ENCODE measurements at regions of chr11 and their contacts with region 1.

Region 1: GRCh38 chr11:67439321-67439883 is 1.9 kb upstream of the PTPRCAP start:
- DNase-seq: no peak
- ATAC-seq: no peak
- H3K4me3 ChIP-seq: peak overlapping the region; percentile 90
- H3K27ac ChIP-seq: peak overlapping the region; percentile 99
- H3K4me1 ChIP-seq: peaks cover 29% of the 10 kb centered on the region
- H3K27me3 ChIP-seq: no peaks in the 10 kb centered on the region
- CTCF ChIP-seq: peak; percentile 23 to 49 (median 24); a peak in 4 of 6 replicates
- EP300 ChIP-seq: no peak
- POLR2A ChIP-seq: no peak
- RAD21 ChIP-seq: no peak

Region 2: GRCh38 chr11:67332081-67332691 is 107.2 kb before region 1 on chr11:
- CTCF ChIA-PET with region 1: no interaction called
- POLR2A ChIA-PET with region 1: no interaction called
- RAD21 ChIA-PET with region 1: no interaction called
- SMC1A ChIA-PET with region 1: no interaction called
- in situ Hi-C with region 1: no loop called
- intact Hi-C with region 1: no loop called
- DNase-seq: no peak
- ATAC-seq: no peak
- H3K4me3 ChIP-seq: no peak overlapping the region
- H3K27ac ChIP-seq: no peak overlapping the region
- H3K4me1 ChIP-seq: no peaks in the 10 kb centered on the region
- H3K27me3 ChIP-seq: no peaks in the 10 kb centered on the region
- CTCF ChIP-seq: no peak
- EP300 ChIP-seq: no peak
- POLR2A ChIP-seq: no peak
- RAD21 ChIP-seq: no peak

Region 3: DNA sequence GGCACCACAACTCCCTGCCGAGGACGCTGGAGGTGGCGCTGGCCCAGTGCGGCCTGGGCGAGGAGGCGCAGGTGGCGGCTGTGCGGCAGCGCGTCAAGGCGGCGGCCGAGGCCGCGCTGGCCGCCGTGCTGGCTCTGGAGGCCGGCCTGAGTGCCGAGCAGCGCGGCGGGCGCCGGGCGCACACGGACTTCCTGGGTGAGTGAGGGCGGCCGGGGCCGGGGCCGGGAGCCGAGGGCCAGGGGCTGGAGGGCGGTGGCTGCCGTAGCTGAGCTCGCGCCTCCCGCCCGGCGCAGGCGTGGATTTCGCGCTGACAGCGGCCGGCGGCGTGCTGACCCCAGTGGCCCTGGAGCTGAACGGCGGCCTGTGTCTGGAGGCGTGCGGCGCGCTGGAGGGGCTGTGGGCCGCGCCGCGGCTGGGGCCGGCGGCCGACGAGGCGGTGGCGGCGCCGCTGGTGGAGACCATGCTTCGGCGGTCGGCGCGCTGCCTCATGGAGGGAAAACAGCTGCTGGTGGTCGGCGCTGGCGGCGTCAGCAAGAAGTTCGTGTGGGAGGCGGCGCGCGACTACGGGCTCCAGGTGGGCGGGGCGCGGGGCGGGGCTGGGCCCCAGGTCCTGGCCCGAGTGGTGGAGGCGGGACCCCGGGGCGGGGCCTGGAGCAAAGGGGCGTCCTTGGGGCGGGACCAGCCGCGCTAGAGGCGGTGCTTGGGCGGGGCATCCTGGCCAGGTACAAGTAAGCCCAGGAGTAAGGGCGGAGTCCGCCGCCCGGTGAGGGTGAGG is 18.6 kb before region 1 on chr11:
- CTCF ChIA-PET with region 1: interaction called, 4 read pairs
- POLR2A ChIA-PET with region 1: interaction called, 16 read pairs
- RAD21 ChIA-PET with region 1: interaction called, 3 read pairs
- SMC1A ChIA-PET with region 1: interaction called, 3 read pairs
- in situ Hi-C with region 1: no loop called
- intact Hi-C with region 1: no loop called
- DNase-seq: no peak
- ATAC-seq: peak; percentile 94
- H3K4me3 ChIP-seq: peak overlapping the region; percentile 71
- H3K27ac ChIP-seq: no peak overlapping the region; the same call in 1 of the 2 replicates
- H3K4me1 ChIP-seq: peaks cover 2% of the 10 kb centered on the region; the same call in 1 of the 2 replicates
- H3K27me3 ChIP-seq: peaks cover 0 to 3% of the 10 kb centered on the region in 2 experiments; a peak in 2 of 4 replicates
- CTCF ChIP-seq: no peak
- EP300 ChIP-seq: no peak
- POLR2A ChIP-seq: peak; percentile 77
- RAD21 ChIP-seq: no peak

Region 4: GRCh38 chr11:67458266-67458665 is 18.9 kb after region 1 on chr11:
- CTCF ChIA-PET with region 1: interaction called, 20 read pairs
- POLR2A ChIA-PET with region 1: interaction called, 50 read pairs
- RAD21 ChIA-PET with region 1: interaction called, 7 read pairs
- SMC1A ChIA-PET with region 1: interaction called, 27 read pairs
- in situ Hi-C with region 1: no loop called
- intact Hi-C with region 1: no loop called
- DNase-seq: no peak
- ATAC-seq: no peak
- H3K4me3 ChIP-seq: no peak overlapping the region
- H3K27ac ChIP-seq: no peak overlapping the region
- H3K4me1 ChIP-seq: peaks cover 19% of the 10 kb centered on the region
- H3K27me3 ChIP-seq: no peaks in the 10 kb centered on the region
- CTCF ChIP-seq: no peak
- EP300 ChIP-seq: no peak
- POLR2A ChIP-seq: no peak
- RAD21 ChIP-seq: no peak

Region 5: DNA sequence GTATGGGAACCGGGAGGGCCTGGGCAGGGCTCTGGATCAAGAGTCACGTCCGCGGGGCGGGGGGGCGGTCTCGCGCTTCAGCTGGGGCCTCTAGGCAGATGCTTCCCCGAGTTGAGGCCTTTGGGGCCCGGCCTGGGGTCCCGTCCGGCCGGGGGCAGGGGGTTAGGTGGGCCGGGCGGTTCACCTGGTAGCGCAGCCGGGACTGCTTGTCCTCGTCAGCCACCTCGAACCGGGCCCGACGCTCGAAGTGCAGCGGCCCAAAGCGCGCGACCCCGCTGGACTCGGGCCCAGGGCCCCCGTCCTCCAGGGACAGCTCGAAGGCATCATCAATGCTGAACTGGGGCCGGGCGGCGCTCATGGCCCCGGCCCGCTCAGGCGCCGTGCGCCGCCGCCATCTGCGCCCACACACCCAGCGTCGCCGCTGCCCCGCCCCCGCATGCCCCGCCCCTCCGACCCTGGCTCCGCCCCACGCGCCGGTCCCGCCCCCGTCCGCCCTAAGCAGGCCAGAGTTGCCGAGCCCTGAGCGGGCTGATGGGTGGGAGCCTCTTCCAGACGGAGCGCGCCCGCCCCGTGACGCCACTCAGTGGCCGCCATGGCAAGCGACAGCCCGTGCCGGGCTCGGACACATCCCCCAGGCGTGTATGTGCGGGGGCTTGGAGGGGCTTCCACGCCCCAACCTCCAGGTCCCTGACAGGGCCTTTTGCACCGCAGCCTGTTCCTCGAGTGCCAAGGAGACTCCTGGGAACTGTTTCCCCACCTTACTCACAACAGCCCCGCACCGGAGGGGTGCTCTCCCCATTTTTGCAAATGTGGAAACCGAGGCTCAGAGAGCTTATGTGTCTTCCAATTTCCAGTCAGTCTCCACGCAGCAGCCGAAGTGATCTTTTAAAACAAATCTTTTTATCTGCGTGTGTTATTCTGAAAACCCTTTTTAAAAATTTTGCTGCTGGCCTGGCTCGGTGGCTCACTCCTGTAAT is 29.7 kb after region 1 on chr11 and contains the start of gene TMEM134:
- CTCF ChIA-PET with region 1: interaction called, 5 read pairs
- POLR2A ChIA-PET with region 1: interaction called, 78 read pairs
- RAD21 ChIA-PET with region 1: interaction called, 32 read pairs
- SMC1A ChIA-PET with region 1: interaction called, 24 read pairs
- in situ Hi-C with region 1: no loop called
- intact Hi-C with region 1: loop called (anchors 2 kb)
- DNase-seq: peak; percentile 57
- ATAC-seq: peak; percentile 83
- H3K4me3 ChIP-seq: peak within 1 kb of the TSS; percentile 86
- H3K27ac ChIP-seq: peak within 1 kb of the TSS; percentile 78
- H3K4me1 ChIP-seq: peaks cover 33% of the 10 kb centered on the region
- H3K27me3 ChIP-seq: no peaks in the 10 kb centered on the region
- CTCF ChIP-seq: peak; percentile 45 to 76 (median 64)
- EP300 ChIP-seq: peak in 1 of 2 experiments; percentile 46; a peak in 1 of 4 replicates
- POLR2A ChIP-seq: peak; percentile 88
- RAD21 ChIP-seq: peak; percentile 65
- polyA plus RNA-seq, gene TMEM134: 1.6 to 7.0 TPM

Region 6: GRCh38 chr11:67507864-67508485 is 68.6 kb after region 1 on chr11 and contains the start of gene CDK2AP2:
- CTCF ChIA-PET with region 1: interaction called, 3 read pairs
- POLR2A ChIA-PET with region 1: interaction called, 5 read pairs
- RAD21 ChIA-PET with region 1: interaction called, 8 read pairs
- SMC1A ChIA-PET with region 1: interaction called, 8 read pairs
- in situ Hi-C with region 1: no loop called
- intact Hi-C with region 1: loop called (anchors 2 kb)
- DNase-seq: peak; percentile 99
- ATAC-seq: peak; percentile 86
- H3K4me3 ChIP-seq: peak within 1 kb of the TSS; percentile 82
- H3K27ac ChIP-seq: peak within 1 kb of the TSS; percentile 94
- H3K4me1 ChIP-seq: peaks cover 27% of the 10 kb centered on the region
- H3K27me3 ChIP-seq: no peaks in the 10 kb centered on the region; a peak in 1 of 4 replicates
- CTCF ChIP-seq: no peak
- EP300 ChIP-seq: no peak
- POLR2A ChIP-seq: peak; percentile 86
- RAD21 ChIP-seq: no peak
- polyA plus RNA-seq, gene CDK2AP2: 8.0 to 18.0 TPM